B cell (primary cell): ENCODE measurements at regions of chr15 and their contacts with region 1.

Region 1: GRCh38 chr15:39756806-39757522 is 25.7 kb downstream of the FSIP1 start:
- DNase-seq: peak; percentile 56
- ATAC-seq: no peak
- H3K4me3 ChIP-seq: no peak overlapping the region
- H3K4me3 Mint-ChIP-seq: no peak overlapping the region
- H3K27ac ChIP-seq: no peak overlapping the region
- H3K27ac Mint-ChIP-seq: no peak overlapping the region
- H3K4me1 ChIP-seq: no peaks in the 10 kb centered on the region
- H3K4me1 Mint-ChIP-seq: no peaks in the 10 kb centered on the region
- H3K27me3 ChIP-seq: no peaks in the 10 kb centered on the region
- H3K27me3 Mint-ChIP-seq: peaks cover 14% of the 10 kb centered on the region
- CTCF ChIP-seq: peak; percentile 95

Region 2: DNA sequence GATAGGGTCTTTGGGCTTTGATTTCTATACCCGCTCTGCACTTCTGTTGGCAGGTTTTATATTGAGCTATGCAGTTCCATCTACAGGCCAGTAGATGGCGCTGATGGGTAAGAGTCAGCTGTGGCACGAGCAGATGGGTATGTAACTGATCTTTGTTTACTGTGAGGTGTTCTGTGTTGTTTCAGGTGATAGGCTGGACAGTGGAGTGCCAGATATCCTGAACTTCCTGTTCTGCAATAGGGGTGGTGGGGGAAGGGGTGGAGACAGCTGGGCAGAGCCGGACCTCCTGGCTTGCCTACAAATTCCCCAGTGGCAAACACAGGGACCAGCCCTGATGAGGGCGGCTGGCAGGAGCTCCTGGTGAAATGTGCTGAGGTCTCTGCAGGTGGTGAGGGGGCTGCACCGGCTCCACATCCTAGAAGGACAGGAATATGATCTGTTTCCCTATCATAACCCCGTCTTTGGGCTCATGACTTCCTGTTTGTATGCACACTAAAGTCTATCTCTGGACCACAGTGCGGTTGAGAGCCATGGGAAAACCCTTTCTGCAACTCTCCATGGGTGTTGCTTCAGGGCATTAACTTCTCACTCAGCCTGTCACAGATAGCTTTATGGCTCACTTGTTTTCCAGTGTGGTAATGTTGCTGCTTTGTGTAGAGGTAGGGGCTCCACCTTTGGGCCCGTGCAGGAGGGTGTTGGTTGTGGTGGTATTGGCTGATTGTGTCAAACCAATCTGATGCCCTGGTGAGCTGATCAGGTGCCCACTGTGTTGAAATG is 1316.4 kb before region 1 on chr15:
- CTCF ChIA-PET with region 1: interaction called, 25 read pairs
- POLR2A ChIA-PET with region 1: no interaction called
- intact Hi-C with region 1: no loop called
- DNase-seq: peak; percentile 76
- ATAC-seq: peak; percentile 95
- H3K4me3 ChIP-seq: no peak overlapping the region
- H3K4me3 Mint-ChIP-seq: no peak overlapping the region
- H3K27ac ChIP-seq: no peak overlapping the region
- H3K27ac Mint-ChIP-seq: no peak overlapping the region
- H3K4me1 ChIP-seq: peaks cover 0 to 5% of the 10 kb centered on the region in 2 donors
- H3K4me1 Mint-ChIP-seq: peaks cover 2% of the 10 kb centered on the region
- H3K27me3 ChIP-seq: peaks cover 0 to 2% (median 0%) of the 10 kb centered on the region in 4 experiments
- H3K27me3 Mint-ChIP-seq: peaks cover 39% of the 10 kb centered on the region
- CTCF ChIP-seq: peak; percentile 97

Region 3: DNA sequence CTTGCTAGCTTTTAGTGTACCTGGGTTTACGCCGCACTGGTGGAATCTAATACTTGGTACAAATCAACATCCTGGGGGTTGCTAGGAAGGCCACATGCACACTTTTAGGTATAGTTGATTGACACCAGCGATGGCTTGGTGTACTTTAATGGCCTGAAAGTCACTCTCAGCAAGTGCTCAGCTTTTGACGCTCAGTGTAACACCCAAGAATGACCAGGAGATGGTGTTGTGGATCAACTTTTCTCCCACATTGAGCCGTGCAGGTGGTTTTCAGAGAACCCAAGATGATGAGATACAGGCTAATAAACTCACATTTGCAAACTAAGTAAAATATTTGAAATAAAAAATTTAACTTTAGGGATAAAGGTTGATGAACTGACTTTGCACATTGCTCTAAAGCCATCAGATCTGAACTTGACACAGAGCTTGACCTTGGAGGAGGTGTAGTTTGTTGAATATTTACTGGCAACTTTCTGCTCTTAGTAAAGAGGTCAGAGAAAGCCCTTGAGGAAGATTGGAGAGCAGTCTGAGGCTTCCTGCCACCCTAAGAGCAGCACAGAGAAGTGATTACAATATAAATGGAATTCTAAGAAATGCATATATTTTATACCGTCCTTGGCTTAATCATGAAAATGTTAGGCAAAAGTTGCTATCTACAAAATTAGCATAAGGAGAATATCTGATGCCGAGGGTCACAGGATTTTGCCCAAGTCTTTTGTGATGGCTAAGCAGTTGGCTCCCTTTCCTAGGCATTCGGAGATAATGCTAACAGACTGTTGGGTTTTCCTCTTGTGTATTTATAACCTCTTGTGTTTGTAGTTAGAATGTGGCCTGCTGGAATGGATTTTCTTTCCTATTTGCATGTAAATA is 1048.9 kb before region 1 on chr15:
- CTCF ChIA-PET with region 1: interaction called, 28 read pairs
- POLR2A ChIA-PET with region 1: no interaction called
- intact Hi-C with region 1: loop called (anchors 2 kb)
- DNase-seq: peak; percentile 37
- ATAC-seq: peak; percentile 39
- H3K4me3 ChIP-seq: no peak overlapping the region
- H3K4me3 Mint-ChIP-seq: no peak overlapping the region
- H3K27ac ChIP-seq: no peak overlapping the region
- H3K27ac Mint-ChIP-seq: no peak overlapping the region
- H3K4me1 ChIP-seq: no peaks in the 10 kb centered on the region
- H3K4me1 Mint-ChIP-seq: no peaks in the 10 kb centered on the region
- H3K27me3 ChIP-seq: peaks cover 0 to 4% (median 1%) of the 10 kb centered on the region in 4 experiments
- H3K27me3 Mint-ChIP-seq: peaks cover 33% of the 10 kb centered on the region
- CTCF ChIP-seq: peak; percentile 71

Region 4: DNA sequence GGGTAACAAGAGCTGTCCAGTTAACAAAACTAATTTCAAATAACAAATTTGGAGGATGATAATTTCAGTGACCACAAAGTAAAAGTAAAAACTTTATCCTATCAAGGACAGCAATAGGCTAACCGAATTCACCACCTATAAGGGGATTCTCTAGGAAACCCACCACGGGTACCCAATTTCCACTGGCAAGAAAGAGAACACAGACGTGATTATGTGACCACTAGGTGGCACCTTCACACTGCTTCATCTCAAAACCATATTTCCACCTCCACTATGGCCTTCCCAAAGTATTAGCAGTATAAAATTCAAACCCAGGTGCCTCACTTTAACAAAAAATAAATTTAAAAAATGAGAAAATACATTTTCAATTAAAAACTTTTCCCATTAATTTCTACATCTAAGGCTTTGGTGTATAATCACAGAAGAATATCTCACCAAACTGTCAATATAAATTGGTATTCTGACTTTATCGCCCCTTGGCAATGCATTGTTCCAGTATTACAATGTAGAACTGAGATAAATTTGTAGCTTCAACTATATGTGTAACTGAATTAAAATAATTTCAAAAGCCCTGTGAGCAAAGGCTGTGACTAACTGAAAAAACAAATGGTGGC is 70.9 kb before region 1 on chr15:
- CTCF ChIA-PET with region 1: interaction called, 71 read pairs
- POLR2A ChIA-PET with region 1: no interaction called
- intact Hi-C with region 1: loop called (anchors 1 kb)
- DNase-seq: peak; percentile 56
- ATAC-seq: peak; percentile 33
- H3K4me3 ChIP-seq: no peak overlapping the region
- H3K4me3 Mint-ChIP-seq: no peak overlapping the region
- H3K27ac ChIP-seq: no peak overlapping the region
- H3K27ac Mint-ChIP-seq: no peak overlapping the region
- H3K4me1 ChIP-seq: no peaks in the 10 kb centered on the region
- H3K4me1 Mint-ChIP-seq: no peaks in the 10 kb centered on the region
- H3K27me3 ChIP-seq: no peaks in the 10 kb centered on the region
- H3K27me3 Mint-ChIP-seq: peaks cover 4% of the 10 kb centered on the region
- CTCF ChIP-seq: peak; percentile 92

Region 5: DNA sequence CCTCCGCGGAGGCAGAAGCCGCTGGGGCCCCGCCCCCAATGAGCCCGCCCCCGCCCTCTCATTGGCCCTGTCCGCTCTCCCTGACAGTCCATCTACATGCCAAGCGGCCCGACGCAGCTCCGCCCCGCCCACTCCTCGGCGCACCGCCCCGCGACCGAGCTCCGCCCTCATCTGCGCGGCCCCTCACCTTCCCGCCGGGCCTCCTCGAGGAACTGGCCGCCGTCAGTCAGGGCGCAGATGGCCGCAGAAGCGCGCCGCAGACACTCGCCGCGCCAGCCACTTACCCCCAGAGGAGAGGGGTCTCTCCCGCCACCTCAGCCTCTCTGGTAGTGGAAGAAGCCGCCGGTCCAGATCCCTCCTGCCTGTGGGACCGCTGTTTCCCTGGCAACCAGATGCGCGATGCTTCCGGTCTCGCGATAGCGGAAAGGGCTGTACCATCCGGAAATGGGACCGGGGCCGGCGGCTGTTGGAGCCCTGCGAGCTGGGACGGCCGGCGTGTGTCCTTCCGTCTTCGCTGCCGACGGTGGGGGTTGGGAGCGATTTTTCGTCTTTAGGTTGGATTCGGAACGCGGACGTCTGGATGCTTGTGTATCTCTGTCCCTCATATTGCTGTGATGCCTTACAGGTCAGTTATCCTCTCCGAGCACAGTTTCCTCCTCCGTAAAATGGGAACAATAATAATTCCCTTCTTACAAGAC is 25.6 kb after region 1 on chr15 and contains the start of gene FSIP1:
- CTCF ChIA-PET with region 1: interaction called, 16 read pairs
- POLR2A ChIA-PET with region 1: no interaction called
- intact Hi-C with region 1: no loop called
- DNase-seq: peak; percentile 98
- ATAC-seq: peak; percentile 99
- H3K4me3 ChIP-seq: peak within 1 kb of the TSS; percentile 81 to 98 (median 91)
- H3K4me3 Mint-ChIP-seq: peak within 1 kb of the TSS; percentile 85
- H3K27ac ChIP-seq: peak within 1 kb of the TSS; percentile 63 to 83
- H3K27ac Mint-ChIP-seq: peak within 1 kb of the TSS; percentile 97
- H3K4me1 ChIP-seq: peaks cover 17 to 18% of the 10 kb centered on the region in 2 donors
- H3K4me1 Mint-ChIP-seq: peaks cover 43% of the 10 kb centered on the region
- H3K27me3 ChIP-seq: peaks cover 0 to 5% (median under 1%) of the 10 kb centered on the region in 4 experiments
- H3K27me3 Mint-ChIP-seq: peaks cover 5% of the 10 kb centered on the region
- CTCF ChIP-seq: no peak
- total RNA-seq, gene FSIP1: 0.44 and 0.49 TPM in 2 replicates